Tibial artery (tissue), 4 donors: ENCODE measurements at regions of chr11 and their contacts with region 1.

Region 1: GRCh38 chr11:65719887-65720236 is 736 bp downstream of the RNASEH2C start:
- DNase-seq: no peak
- H3K4me3 ChIP-seq: peak overlapping the region; percentile 59 to 78
- H3K27ac ChIP-seq: peak overlapping the region; percentile 77 to 90
- H3K4me1 ChIP-seq: peaks cover 0 to 32% (median 20%) of the 10 kb centered on the region in 4 donors
- H3K27me3 ChIP-seq: no peaks in the 10 kb centered on the region
- CTCF ChIP-seq: no peak

Region 2: DNA sequence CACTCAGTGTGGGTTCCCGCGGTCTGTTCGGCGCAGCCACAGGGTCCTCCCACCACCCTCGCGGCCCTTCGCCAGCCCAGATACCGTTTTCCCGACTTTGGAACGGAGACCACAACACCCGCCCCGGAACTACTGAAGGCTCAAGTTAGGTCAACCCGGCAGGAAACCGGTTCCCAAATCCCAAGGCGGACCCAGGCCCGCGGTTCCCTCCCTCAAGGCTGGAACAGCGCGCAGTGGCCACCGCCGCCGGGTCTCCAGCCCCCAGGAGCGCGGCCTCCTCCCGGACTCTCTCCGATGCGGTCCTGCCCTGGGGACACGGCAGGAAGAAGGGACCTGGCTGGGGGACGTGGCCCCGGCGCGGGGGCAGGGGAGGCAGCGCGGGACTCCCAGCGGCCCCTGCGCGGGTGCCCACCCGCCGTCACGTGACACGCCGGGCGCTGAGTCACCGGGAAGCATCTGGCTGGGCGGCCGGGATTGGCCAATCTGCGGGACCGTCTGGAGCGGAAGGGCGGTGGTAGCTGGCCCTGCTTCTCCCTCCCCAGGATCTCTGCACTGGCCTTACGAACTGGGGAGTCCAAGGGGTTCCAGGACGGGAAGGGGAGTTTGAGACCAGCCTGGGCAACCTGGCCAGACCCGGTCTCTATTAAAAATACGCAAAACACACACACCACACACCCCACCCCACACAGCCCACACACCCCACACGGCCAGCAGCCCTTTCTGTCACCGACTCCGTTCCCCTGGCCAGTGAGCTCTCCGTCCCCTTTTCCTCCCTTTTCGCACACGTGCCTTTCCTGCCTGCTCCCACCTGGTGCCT is 242.5 kb before region 1 on chr11:
- intact Hi-C with region 1: no loop called
- DNase-seq: peak; percentile 97 to 98
- H3K4me3 ChIP-seq: peak overlapping the region; percentile 81 to 91
- H3K27ac ChIP-seq: peak overlapping the region; percentile 97 to 99
- H3K4me1 ChIP-seq: peaks cover 0 to 84% (median 60%) of the 10 kb centered on the region in 4 donors
- H3K27me3 ChIP-seq: no peaks in the 10 kb centered on the region
- CTCF ChIP-seq: peak in 1 of 2 experiments; percentile 11

Region 3: GRCh38 chr11:65646921-65647751 is 72.7 kb before region 1 on chr11:
- intact Hi-C with region 1: no loop called
- DNase-seq: peak in 1 of 2 donors; percentile 84
- H3K4me3 ChIP-seq: peak overlapping the region; percentile 29 to 45
- H3K27ac ChIP-seq: peak overlapping the region; percentile 49 to 70
- H3K4me1 ChIP-seq: peaks cover 0 to 43% (median 20%) of the 10 kb centered on the region in 4 donors
- H3K27me3 ChIP-seq: no peaks in the 10 kb centered on the region
- CTCF ChIP-seq: no peak

Region 4: GRCh38 chr11:65766535-65766934 is 46.7 kb after region 1 on chr11:
- intact Hi-C with region 1: no loop called
- DNase-seq: no peak
- H3K4me3 ChIP-seq: no peak overlapping the region
- H3K27ac ChIP-seq: no peak overlapping the region
- H3K4me1 ChIP-seq: peaks cover 0 to 6% (median 2%) of the 10 kb centered on the region in 4 donors
- H3K27me3 ChIP-seq: no peaks in the 10 kb centered on the region
- CTCF ChIP-seq: no peak

Region 5: DNA sequence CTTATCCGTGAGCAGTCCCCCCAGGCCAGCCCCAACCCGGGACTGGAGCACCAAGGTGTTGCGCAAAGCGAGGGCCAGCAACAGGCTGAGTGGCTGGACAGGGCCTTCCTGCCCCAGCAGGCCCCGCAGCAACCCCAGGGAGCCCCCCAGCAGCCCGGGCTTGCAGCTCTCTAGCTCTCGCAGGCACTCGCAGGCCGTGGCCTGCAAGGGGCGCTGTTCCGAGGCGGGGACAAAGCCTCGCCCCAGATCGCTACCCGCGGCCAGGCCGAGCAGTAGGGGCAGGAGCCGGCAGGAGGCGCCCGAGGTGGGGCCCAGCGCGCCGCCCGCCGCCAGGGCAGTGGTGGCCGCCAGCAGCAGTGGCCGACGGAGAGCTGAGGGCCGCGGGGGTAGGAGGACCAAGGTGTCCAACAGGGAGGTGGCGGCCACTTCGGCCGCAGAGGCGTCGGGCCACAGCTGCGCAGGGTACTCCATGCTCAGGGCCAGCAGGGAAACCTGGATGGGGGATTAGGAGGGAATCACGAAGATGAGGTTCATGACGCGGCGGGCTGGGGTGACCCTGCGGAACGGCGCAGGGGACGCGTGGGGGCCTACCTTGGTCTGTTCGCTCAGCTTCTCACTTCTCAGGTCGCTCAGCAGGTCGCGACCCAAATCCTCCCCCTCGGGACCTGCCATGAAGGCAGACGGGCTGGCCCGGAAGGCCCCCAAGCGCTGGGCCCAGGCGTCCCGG is 60.2 kb after region 1 on chr11:
- intact Hi-C with region 1: loop called (anchors 5 kb)
- DNase-seq: peak; percentile 57 to 88
- H3K4me3 ChIP-seq: peak overlapping the region; percentile 72 to 90
- H3K27ac ChIP-seq: peak overlapping the region; percentile 73 to 87
- H3K4me1 ChIP-seq: peaks cover 0 to 32% (median 19%) of the 10 kb centered on the region in 4 donors
- H3K27me3 ChIP-seq: no peaks in the 10 kb centered on the region
- CTCF ChIP-seq: peak; percentile 80 to 87